ENCODE measurements at regions of chr3 and their contacts with region 1.

Region 1: DNA sequence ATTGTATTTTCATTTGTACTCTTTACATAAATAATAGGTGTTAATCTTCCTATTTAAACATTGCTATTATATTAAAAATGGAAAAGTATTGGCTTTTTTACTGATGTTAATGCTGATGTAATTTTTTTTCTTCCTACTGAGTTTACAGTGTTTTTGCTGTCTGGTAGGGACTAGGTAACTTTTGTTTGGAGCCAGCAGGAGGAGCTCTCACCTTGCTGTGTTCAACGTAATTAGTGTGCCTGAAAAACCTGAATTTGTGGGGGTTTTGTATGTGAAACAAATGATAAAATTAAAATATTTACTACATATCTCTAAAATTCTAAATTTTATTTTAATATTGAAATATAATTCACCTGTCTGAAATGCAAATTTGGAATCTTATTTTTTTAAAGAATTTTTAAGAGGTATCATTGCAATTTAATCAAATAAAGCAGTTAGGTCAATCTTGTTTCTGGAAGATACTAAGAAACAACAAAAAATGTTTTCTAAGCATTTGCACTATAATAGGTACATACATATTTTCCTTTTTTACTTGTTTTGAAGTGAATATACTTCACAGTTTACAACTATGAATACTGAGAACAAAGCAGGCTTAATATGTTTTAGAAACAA is 48.8 kb downstream of the EPHA6 start:
- DNase-seq: no peak
- CTCF ChIP-seq: peak; percentile 74

Region 2: GRCh38 chr3:96756516-96756915 is 106.7 kb before region 1 on chr3:
- in situ Hi-C with region 1: no loop called
- DNase-seq: no peak
- CTCF ChIP-seq: no peak

Region 3: GRCh38 chr3:97057350-97057749 is 194.1 kb after region 1 on chr3:
- in situ Hi-C with region 1: no loop called
- DNase-seq: no peak
- CTCF ChIP-seq: no peak

Region 4: GRCh38 chr3:97719156-97719821 is 856.1 kb after region 1 on chr3:
- in situ Hi-C with region 1: loop called (anchors 25 kb)
- DNase-seq: peak; percentile 34
- CTCF ChIP-seq: peak; percentile 88

Measured in GM13977 (cell line).